HepG2 (cell line): ENCODE measurements at regions of chr4 and their contacts with region 1.

Region 1: DNA sequence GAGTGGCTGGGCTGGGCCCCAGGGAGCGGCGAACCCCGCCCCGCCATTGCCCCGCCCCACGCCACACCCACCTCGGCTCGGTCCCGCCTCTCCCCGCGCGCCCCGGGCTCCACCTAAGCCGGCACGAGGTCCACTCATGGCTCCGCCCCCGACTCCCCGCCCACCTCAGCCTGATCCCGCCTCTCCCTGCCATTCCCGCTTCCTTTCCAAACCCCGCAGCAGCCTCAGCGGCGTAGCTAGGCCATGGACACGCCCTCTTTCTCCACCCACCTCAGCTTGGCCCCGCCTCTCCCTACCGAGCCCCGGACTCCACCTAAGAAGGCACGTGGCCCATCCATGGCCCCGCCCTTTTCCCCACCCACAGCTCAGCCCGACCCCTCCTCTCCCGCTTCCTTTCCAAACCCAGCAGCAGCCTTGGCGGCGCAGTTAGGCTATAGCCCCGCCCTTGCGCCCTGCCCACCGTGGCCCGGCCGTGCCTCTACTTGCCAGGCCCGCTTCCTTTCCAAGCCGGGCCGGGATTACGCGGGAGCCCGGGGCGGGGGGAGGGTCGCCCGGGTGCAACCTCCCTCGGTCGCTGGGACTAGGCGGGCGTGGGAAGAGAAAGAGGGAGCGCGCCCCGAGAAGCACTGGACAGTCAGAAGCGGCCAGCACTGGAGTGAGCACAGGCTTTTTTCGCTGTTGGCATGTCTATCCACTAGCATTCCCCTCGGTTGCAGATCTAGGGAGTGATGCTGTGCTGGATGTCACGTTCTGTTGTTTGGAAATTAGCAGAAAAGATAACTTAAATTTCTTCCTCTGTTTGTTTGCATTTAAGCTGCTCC is at the start of gene RELL1:
- DNase-seq: peak; percentile 96
- ATAC-seq: peak; percentile 87
- H3K4me3 ChIP-seq: peak within 1 kb of the TSS; percentile 74 to 86 (median 81)
- H3K27ac ChIP-seq: peak within 1 kb of the TSS; percentile 90
- H3K4me1 ChIP-seq: peaks cover 42% of the 10 kb centered on the region
- H3K27me3 ChIP-seq: no peaks in the 10 kb centered on the region; a peak in 1 of 5 replicates
- CTCF ChIP-seq: peak; percentile 38
- EP300 ChIP-seq: peak in 1 of 2 experiments; percentile 15; a peak in 1 of 4 replicates
- POLR2A ChIP-seq: 0 out of 4 replicates have a peak, but pooled peaks of 1 of the 2 experiments have one; percentile 4
- RAD21 ChIP-seq: peak; percentile 16; the same call in 1 of the 2 replicates
- total RNA-seq, gene RELL1: 40.1 and 58.4 TPM in 2 replicates

Region 2: GRCh38 chr4:37603070-37603468 is 83.5 kb before region 1 on chr4:
- CTCF ChIA-PET with region 1: interaction called, 14 read pairs
- POLR2A ChIA-PET with region 1: interaction called, 3 read pairs
- in situ Hi-C with region 1: loop called (anchors 5 kb)
- intact Hi-C with region 1: loop called (anchors 1 kb)
- DNase-seq: peak; percentile 55
- ATAC-seq: peak; percentile 90
- H3K4me3 ChIP-seq: no peak overlapping the region
- H3K27ac ChIP-seq: no peak overlapping the region
- H3K4me1 ChIP-seq: peaks cover 47% of the 10 kb centered on the region
- H3K27me3 ChIP-seq: no peaks in the 10 kb centered on the region
- CTCF ChIP-seq: peak; percentile 97
- EP300 ChIP-seq: no peak
- POLR2A ChIP-seq: no peak
- RAD21 ChIP-seq: peak; percentile 95

Region 3: DNA sequence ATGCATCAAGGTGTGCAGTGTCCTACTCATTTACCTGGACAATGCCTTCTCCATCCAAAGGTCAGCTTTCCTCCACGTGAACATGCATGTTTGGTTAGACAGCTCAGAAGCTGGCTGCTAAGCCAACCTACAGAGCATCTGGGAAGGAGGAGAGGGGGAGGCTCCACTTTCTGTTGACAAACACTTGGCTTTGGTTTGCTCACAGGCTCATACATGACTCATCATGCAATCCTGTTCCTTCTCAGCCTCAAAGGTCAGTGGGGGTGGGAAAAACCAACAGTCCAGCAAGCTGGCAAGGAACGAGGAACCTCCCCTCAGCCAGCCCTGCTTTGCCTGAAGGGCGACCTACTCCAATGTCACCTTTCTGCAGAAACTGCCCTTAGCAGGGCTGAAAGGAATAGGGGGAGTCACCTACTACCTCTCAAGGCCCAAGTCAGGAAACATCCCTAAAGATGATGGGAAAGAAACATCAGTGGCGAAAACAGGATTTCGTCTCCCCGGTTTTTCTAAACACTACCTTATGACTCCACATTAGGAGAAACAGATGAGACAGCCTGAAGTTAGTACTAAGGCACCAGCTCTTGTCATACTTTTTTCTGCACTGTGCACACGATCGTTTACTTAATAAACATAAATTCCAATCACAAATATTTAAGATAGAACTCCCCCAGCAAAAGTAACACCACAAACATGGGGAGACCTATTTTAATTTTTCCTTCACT is 38.3 kb before region 1 on chr4:
- CTCF ChIA-PET with region 1: no interaction called
- POLR2A ChIA-PET with region 1: interaction called, 16 read pairs
- in situ Hi-C with region 1: no loop called
- intact Hi-C with region 1: loop called (anchors 5 kb)
- DNase-seq: peak; percentile 92
- ATAC-seq: peak; percentile 95
- H3K4me3 ChIP-seq: peak overlapping the region in 1 of 3 experiments; percentile 11; a peak in 1 of 6 replicates
- H3K27ac ChIP-seq: peak overlapping the region; percentile 65
- H3K4me1 ChIP-seq: peaks cover 49% of the 10 kb centered on the region
- H3K27me3 ChIP-seq: no peaks in the 10 kb centered on the region
- CTCF ChIP-seq: no peak
- EP300 ChIP-seq: peak in 1 of 2 experiments; percentile 91; a peak in 2 of 4 replicates
- POLR2A ChIP-seq: no peak
- RAD21 ChIP-seq: no peak; the same call in 1 of the 2 replicates

Region 4: GRCh38 chr4:37661772-37662171 is 24.8 kb before region 1 on chr4:
- CTCF ChIA-PET with region 1: no interaction called
- POLR2A ChIA-PET with region 1: interaction called, 7 read pairs
- in situ Hi-C with region 1: no loop called
- intact Hi-C with region 1: loop called (anchors 1 kb)
- DNase-seq: no peak
- ATAC-seq: no peak
- H3K4me3 ChIP-seq: no peak overlapping the region
- H3K27ac ChIP-seq: peak overlapping the region; percentile 83
- H3K4me1 ChIP-seq: peaks cover 92% of the 10 kb centered on the region
- H3K27me3 ChIP-seq: no peaks in the 10 kb centered on the region
- CTCF ChIP-seq: no peak
- EP300 ChIP-seq: no peak
- POLR2A ChIP-seq: no peak
- RAD21 ChIP-seq: no peak

Region 5: GRCh38 chr4:37726666-37727065 is 40.1 kb after region 1 on chr4:
- CTCF ChIA-PET with region 1: no interaction called
- POLR2A ChIA-PET with region 1: interaction called, 12 read pairs
- in situ Hi-C with region 1: no loop called
- intact Hi-C with region 1: loop called (anchors 1 kb)
- DNase-seq: no peak
- ATAC-seq: no peak
- H3K4me3 ChIP-seq: no peak overlapping the region
- H3K27ac ChIP-seq: peak overlapping the region; percentile 11
- H3K4me1 ChIP-seq: peaks cover 66% of the 10 kb centered on the region
- H3K27me3 ChIP-seq: no peaks in the 10 kb centered on the region
- CTCF ChIP-seq: no peak
- EP300 ChIP-seq: no peak
- POLR2A ChIP-seq: no peak
- RAD21 ChIP-seq: no peak

Region 6: DNA sequence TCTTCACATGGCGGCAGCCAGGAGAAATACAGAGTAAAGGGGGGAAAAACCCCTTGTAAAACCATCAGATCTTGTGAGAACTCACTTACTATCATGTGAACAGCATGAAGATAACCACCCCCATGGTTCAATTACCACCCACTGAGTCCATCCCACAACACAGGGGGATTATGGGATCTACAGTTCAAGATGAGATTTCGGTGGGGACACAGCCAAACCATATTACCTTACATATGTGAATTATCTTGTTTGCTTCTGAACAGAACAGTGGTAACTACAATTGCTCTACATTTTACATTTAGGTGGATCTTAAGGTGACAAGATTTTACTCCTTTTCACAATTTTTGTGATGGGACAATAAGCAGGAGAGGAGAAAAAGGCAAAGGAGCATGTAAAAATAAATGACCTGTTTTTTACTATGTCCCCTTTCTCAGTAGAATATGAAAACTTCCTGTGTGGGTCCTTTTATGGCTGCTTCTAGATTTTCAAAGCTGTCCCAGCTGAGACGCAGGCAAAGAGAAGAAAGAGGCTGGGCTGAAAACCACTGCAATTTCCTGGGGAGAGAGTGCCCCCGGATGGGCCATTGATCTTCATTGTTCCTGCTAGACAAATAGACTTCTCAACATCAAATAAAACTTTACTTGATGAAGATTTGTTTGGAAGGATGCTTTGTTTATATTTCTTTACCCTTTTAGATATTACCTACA is 94.0 kb after region 1 on chr4:
- CTCF ChIA-PET with region 1: no interaction called
- POLR2A ChIA-PET with region 1: no interaction called
- in situ Hi-C with region 1: no loop called
- intact Hi-C with region 1: loop called (anchors 5 kb)
- DNase-seq: peak; percentile 36
- ATAC-seq: peak; percentile 72
- H3K4me3 ChIP-seq: no peak overlapping the region
- H3K27ac ChIP-seq: no peak overlapping the region
- H3K4me1 ChIP-seq: peaks cover 22% of the 10 kb centered on the region
- H3K27me3 ChIP-seq: no peaks in the 10 kb centered on the region; a peak in 1 of 5 replicates
- CTCF ChIP-seq: peak; percentile 62
- EP300 ChIP-seq: no peak
- POLR2A ChIP-seq: no peak
- RAD21 ChIP-seq: 0 out of 2 replicates have a peak, but pooled peaks have one; percentile 24

Region 7: DNA sequence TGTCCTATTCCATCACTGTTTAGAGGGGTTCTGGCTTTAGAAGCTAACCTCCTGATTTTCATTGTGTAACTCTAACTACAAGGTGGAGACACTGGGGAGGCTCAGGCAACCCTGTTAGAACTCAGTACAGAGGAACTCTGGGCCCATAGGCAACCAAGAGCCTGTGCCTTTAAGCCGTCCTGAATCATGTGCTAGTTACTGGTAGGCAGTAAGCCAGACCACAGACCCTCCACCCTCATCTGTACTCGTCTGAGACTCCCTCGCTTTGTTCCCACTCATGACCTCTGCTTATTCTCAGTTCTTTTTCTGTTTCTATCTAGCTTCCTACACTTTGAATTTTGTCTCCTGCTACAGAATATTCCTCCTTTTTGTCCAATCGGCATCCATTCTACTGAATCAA is 235.7 kb after region 1 on chr4:
- CTCF ChIA-PET with region 1: no interaction called
- POLR2A ChIA-PET with region 1: no interaction called
- in situ Hi-C with region 1: no loop called
- intact Hi-C with region 1: no loop called
- DNase-seq: no peak
- ATAC-seq: no peak; the same call in 2 of the 3 replicates
- H3K4me3 ChIP-seq: no peak overlapping the region
- H3K27ac ChIP-seq: no peak overlapping the region
- H3K4me1 ChIP-seq: no peaks in the 10 kb centered on the region
- H3K27me3 ChIP-seq: peaks cover 0 to 13% of the 10 kb centered on the region in 2 experiments; a peak in 2 of 5 replicates
- CTCF ChIP-seq: no peak
- EP300 ChIP-seq: no peak
- POLR2A ChIP-seq: no peak
- RAD21 ChIP-seq: no peak

Region 8: DNA sequence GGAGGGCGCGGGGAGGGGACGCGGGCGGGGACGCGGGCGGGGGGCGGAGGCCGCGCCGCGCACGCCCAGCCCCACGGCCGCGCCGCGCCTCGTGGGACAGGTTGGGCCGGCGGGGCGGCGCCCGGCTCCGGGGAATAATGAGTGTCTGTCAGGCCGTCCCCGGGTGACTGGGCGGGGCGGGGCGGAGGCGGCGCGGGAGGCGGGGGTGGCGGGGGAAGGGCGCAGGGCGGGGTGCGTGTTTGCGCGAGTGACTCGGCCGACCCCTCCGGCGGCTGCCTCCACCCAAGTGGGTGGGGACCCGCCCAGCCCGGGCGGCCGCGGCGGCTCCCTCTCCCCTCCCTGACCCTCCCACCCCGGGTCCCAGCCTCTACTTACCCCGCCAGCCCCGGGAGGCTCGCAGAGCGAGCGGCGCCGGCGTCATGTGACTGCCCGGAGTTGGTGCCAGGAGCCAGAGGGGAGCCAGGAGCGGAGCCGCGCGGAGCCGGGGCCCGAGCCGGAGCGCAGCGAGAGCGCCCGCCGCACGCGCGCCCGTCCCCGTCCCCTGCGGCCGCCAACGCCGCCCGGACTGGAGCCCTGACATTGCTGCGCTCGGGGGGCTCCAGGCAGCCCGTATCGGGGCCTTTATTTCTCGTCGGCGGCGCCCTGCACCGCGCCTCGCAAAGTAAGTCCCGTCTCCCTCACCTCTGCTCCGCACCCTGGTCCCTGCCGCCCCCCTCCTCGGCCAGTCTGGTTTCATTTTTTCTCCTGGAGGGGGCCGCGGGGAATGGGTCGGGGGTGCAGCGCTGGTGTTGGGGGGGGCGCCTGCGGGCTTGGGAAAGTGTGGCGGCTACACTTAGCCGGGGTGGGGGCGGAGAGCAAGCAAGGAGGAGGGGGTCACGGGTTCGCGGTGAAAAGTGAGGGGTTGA is 977.5 kb after region 1 on chr4 and contains the start of gene KLF3:
- CTCF ChIA-PET with region 1: no interaction called
- POLR2A ChIA-PET with region 1: no interaction called
- in situ Hi-C with region 1: no loop called
- intact Hi-C with region 1: loop called (anchors 10 kb)
- DNase-seq: peak; percentile 73
- ATAC-seq: peak; percentile 68
- H3K4me3 ChIP-seq: peak within 1 kb of the TSS; percentile 77 to 99 (median 90)
- H3K27ac ChIP-seq: peak within 1 kb of the TSS; percentile 96
- H3K4me1 ChIP-seq: peaks cover 22% of the 10 kb centered on the region
- H3K27me3 ChIP-seq: no peaks in the 10 kb centered on the region; a peak in 1 of 5 replicates
- CTCF ChIP-seq: no peak
- EP300 ChIP-seq: 0 out of 4 replicates have a peak, but pooled peaks of 1 of the 2 experiments have one; percentile 10
- POLR2A ChIP-seq: peak; percentile 44 to 71; a peak in 3 of 4 replicates
- RAD21 ChIP-seq: peak; percentile 58
- total RNA-seq, gene KLF3: 29.1 and 45.2 TPM in 2 replicates